ENCODE measurements at regions of chr7 and their contacts with region 1.

Region 1: DNA sequence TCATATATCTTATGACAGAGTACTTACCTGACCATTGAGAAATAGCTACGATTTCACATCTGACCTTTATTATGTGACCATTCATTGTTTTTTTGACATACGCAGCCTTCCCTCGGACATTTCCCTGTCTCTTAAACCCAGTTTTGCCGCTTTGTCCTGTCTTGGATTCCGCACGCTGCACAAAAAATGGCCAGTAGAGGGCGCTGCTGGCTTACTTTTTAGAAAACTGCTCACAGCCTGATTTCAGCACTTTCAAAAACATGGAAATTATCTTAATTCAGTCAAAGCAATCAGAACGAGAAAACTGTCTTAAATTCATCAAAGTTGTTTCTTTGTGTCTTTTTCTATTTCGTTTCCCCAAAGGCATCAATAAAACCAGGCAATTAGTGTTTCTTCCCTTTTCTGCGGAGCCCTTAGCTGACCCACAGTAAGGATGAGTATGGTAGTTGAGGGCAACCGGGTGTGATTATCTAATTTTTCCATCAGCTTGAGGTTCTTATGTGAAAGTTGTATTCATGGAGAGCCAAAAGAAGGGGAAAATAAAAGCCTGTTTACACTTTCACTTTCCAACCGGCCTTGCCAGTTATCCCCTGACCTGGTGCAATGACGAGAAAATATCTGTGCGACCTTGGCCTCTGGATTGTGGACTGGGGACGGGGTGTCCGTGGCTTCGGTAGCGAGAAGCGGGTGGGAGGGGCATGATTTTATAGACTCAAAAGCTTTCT is 144.4 kb downstream of the DYNC1I1 start:
- DNase-seq: peak; percentile 4
- H3K4me3 ChIP-seq: no peak overlapping the region
- CTCF ChIP-seq: peak; percentile 78

Region 2: GRCh38 chr7:95886501-95887090 is 30.1 kb before region 1 on chr7:
- CTCF ChIA-PET with region 1: no interaction called
- POLR2A ChIA-PET with region 1: no interaction called
- DNase-seq: no peak
- H3K4me3 ChIP-seq: no peak overlapping the region
- CTCF ChIP-seq: no peak

Region 3: DNA sequence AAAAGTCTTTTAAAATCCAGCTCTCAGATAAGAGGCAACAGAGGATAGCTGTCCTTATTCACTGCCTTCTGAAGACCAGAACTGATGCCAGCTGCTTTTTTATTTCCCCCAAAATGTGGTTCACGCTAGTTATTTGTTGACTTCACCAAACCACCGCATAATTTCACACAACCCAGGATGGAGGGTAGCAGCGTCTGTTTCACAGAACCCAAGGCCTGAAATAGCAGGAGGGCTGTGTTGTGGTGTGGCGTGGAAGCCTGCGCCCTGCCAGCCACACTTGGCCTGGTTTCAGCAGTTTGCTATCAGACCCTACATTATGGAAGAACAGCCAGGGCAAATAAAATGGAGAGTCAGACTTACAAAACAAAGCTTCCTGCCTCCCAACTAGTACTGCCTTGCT is 11.0 kb after region 1 on chr7:
- CTCF ChIA-PET with region 1: interaction called, 23 read pairs
- POLR2A ChIA-PET with region 1: no interaction called
- DNase-seq: no peak
- H3K4me3 ChIP-seq: no peak overlapping the region
- CTCF ChIP-seq: no peak

Region 4: GRCh38 chr7:97027427-97028234 is 1110.9 kb after region 1 on chr7:
- CTCF ChIA-PET with region 1: interaction called, 119 read pairs
- POLR2A ChIA-PET with region 1: no interaction called
- DNase-seq: peak; percentile 44
- H3K4me3 ChIP-seq: peak overlapping the region; percentile 21
- CTCF ChIP-seq: peak; percentile 88

Region 5: DNA sequence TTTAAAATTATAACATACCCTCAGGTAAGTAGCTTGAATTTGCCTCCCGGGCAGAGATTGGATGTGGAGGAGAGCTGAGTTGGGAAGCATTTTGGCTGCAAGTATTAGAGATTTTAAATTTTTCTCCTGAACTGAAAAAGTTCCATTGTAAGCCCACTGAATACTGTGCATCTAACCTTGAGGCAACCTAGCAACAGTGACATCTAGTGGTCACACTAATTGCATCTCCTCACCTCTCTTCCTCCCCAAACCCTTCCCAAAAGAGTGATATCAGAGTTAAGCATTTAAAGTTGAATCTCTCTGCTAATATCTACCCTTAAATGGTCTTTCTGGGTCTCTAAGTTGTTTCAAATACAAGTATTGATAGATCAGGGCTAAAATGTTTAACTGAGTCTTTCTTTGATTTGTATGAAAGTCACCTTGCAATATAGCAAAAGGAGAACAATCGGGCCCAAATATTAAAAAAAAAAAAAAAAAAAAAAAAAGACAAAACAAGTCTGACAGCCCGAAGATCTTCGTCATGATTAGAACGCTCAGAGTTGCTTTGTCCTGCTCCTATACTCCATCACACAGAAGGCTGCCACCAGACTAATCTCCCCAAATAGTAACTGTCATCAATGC is 1148.3 kb after region 1 on chr7:
- CTCF ChIA-PET with region 1: interaction called, 57 read pairs
- POLR2A ChIA-PET with region 1: no interaction called
- DNase-seq: peak; percentile 3
- H3K4me3 ChIP-seq: no peak overlapping the region
- CTCF ChIP-seq: peak; percentile 63